Calu3 (cell line): ENCODE measurements at regions of chr1 and their contacts with region 1.

Region 1: DNA sequence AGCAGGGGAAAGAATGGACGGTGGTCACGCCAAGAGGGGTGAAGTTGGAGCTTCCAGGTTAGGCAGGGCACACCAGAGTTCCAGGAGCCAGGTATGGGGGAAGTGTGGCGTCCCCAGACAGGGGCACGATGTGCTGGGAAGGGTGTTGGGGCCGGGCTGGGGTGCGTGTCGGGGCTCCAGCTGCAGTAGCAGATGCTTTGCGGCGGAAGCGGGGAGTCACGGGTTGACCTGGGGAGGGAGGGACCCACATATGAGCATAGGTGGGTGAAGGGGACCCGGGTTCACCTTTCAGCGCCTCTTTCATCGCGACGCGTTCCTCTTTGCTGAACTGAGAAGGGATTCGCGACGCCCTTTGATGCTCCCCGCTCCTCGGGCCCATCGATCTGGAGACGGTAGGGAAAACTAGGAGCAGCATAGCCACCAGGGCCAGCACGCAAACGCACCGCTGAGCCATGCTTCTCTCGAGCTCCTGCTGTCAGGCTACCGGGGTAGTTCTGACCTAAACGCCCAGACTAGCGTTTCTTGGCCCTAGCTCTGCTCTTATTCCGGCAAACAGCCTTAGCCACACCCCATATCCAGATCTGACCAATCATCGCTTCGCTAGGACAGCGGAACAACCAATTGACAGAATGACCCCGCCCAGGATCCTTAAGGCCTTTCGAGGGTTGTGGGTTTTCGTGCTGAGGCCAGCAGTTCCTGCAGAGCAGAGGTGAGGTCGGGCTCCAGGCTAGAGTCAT is at the start of gene PM20D1:
- DNase-seq: peak; percentile 91
- H3K4me3 Mint-ChIP-seq: peak within 1 kb of the TSS; percentile 80
- H3K27ac Mint-ChIP-seq: peak within 1 kb of the TSS; percentile 62
- H3K4me1 Mint-ChIP-seq: peaks cover 6% of the 10 kb centered on the region
- H3K27me3 Mint-ChIP-seq: peaks cover 28% of the 10 kb centered on the region
- CTCF ChIP-seq: no peak
- total RNA-seq, gene PM20D1: 0.26 and 0.32 TPM in 2 replicates

Region 2: GRCh38 chr1:205791568-205792180 is 58.1 kb before region 1 on chr1:
- CTCF ChIA-PET with region 1: interaction called, 4 read pairs
- intact Hi-C with region 1: loop called (anchors 10 kb)
- DNase-seq: peak; percentile 81
- H3K4me3 Mint-ChIP-seq: no peak overlapping the region
- H3K27ac Mint-ChIP-seq: no peak overlapping the region
- H3K4me1 Mint-ChIP-seq: no peaks in the 10 kb centered on the region
- H3K27me3 Mint-ChIP-seq: no peaks in the 10 kb centered on the region
- CTCF ChIP-seq: peak; percentile 89

Region 3: DNA sequence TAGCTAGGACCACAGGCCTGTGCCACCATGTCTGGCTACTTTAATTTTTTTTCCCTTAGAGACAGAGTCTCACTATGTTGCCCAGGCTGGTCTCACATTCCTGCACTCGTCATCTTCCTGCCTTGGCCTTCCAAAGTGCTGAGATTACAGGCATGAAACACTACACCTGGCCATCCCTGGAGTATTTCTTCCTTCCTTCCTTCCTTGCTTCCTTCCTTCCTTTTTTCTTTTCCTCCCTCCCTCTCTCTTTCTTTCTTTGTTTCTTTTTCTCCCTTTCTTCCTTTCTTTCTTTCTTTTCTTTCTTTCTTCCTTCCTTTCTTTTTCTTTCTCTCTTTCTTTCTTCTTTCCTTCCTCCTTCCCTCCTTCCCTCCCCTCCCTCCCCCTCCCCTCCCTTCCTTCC is 46.5 kb after region 1 on chr1:
- CTCF ChIA-PET with region 1: no interaction called
- intact Hi-C with region 1: loop called (anchors 5 kb)
- DNase-seq: no peak
- H3K4me3 Mint-ChIP-seq: no peak overlapping the region
- H3K27ac Mint-ChIP-seq: no peak overlapping the region
- H3K4me1 Mint-ChIP-seq: peaks cover 11% of the 10 kb centered on the region
- H3K27me3 Mint-ChIP-seq: peaks cover 15% of the 10 kb centered on the region
- CTCF ChIP-seq: no peak

Region 4: DNA sequence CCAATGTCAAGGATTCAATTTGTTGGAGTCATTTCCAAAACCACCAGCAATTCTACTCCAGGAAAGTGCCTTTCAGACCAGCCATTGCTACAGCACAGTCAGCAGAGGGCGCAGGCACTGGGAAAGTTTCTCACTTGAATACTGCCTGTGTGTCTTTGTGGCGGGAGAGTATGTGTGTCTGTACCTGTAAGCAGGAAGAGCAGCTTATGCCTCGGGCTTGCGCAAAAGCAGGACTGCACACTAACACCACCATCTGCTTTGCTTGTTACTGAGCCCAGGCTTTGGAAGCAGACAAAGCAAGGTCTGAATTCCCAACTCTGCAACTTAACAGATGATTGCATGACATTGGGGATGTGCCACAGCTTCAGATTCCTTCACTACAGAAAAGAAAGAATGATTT is 180.9 kb after region 1 on chr1:
- CTCF ChIA-PET with region 1: no interaction called
- intact Hi-C with region 1: no loop called
- DNase-seq: peak; percentile 90
- H3K4me3 Mint-ChIP-seq: no peak overlapping the region
- H3K27ac Mint-ChIP-seq: peak overlapping the region; percentile 20
- H3K4me1 Mint-ChIP-seq: peaks cover 64% of the 10 kb centered on the region
- H3K27me3 Mint-ChIP-seq: no peaks in the 10 kb centered on the region
- CTCF ChIP-seq: peak; percentile 88